GM12878 (cell line): ENCODE measurements at regions of chr4 and their contacts with region 1.

Region 1: DNA sequence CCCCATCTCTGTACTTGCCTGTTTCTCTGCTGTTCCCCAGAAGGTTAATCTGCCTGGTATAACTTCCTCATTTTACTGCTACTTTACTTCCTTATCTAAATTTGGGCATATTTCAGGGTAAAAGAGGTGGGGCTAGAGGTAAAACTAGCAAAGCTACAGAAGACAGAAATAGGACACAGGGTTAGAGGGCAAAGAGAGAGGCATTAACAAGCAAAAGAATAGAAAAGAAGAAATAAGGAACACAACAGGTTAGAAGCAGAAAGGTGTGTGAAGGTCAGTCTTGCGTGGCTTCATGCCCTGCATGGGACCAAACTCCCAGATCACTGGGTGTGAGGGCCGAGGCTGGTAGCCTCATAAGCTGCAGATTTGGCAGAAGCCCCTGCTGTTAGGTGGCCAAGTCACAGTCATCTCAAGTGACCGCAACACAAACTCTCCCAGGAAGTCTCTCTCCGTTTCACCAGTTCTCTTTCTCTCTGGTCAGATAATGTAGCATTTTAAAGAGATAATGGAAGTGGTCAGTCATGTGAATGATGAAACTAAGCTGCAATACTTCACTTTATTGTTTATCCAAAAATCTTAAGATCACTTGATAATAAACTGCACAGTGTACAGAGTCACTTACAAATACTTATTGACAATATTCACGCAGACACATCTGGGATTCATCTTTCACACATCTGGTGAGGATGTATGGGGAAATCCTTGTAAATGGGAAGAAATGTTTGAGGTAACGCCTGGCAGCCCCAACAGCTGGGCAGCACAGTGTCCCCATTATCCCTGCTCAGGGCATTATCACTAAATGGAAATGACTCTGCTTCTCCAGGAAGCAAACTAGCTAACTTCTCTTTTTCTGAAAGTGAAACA is 16.4 kb downstream of the TMEM154 start:
- DNase-seq: peak; percentile 75
- ATAC-seq: peak; percentile 78
- H3K4me3 ChIP-seq: peak overlapping the region; percentile 51; the same call in 1 of the 2 replicates
- H3K27ac ChIP-seq: peak overlapping the region; percentile 79
- H3K4me1 ChIP-seq: peaks cover 66% of the 10 kb centered on the region
- H3K27me3 ChIP-seq: no peaks in the 10 kb centered on the region
- CTCF ChIP-seq: no peak
- EP300 ChIP-seq: peak in 1 of 2 experiments; percentile 32; a peak in 1 of 4 replicates
- POLR2A ChIP-seq: no peak
- RAD21 ChIP-seq: no peak

Region 2: DNA sequence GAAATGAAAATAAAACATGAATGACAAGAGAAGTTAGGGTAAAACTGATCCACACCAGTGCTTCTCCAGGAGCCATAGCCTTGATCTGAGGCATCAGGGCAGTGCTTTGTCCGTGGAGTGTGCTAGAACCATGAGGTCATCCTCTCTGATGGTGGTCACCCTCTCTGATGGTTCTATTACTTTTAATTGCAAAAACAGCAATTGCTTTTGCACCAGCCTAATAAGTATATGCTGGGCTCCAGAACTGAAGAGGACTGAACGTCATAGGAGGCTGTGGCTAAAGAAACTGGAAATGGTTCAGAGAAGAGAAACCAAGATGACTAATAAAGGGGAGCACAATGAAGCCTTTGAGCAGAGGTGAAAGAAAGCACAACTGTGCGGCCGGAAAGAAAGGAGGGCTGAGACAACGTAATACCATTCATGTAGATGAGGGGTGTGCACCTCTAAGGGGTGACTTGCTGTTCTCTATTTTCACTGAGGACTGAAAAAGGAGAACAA is 33.4 kb after region 1 on chr4:
- CTCF ChIA-PET with region 1: interaction called, 5 read pairs
- POLR2A ChIA-PET with region 1: interaction called, 4 read pairs
- RAD21 ChIA-PET with region 1: interaction called, 13 read pairs
- SMC1A ChIA-PET with region 1: interaction called, 10 read pairs
- in situ Hi-C with region 1: no loop called
- intact Hi-C with region 1: loop called (anchors 1 kb)
- DNase-seq: peak; percentile 98
- ATAC-seq: peak; percentile 97
- H3K4me3 ChIP-seq: peak overlapping the region; percentile 42; the same call in 1 of the 2 replicates
- H3K27ac ChIP-seq: peak overlapping the region; percentile 71
- H3K4me1 ChIP-seq: peaks cover 20% of the 10 kb centered on the region
- H3K27me3 ChIP-seq: no peaks in the 10 kb centered on the region
- CTCF ChIP-seq: no peak
- EP300 ChIP-seq: peak; percentile 85 to 93; a peak in 3 of 4 replicates
- POLR2A ChIP-seq: no peak
- RAD21 ChIP-seq: no peak

Region 3: GRCh38 chr4:152709683-152710438 is 46.4 kb after region 1 on chr4:
- CTCF ChIA-PET with region 1: interaction called, 3 read pairs
- POLR2A ChIA-PET with region 1: interaction called, 6 read pairs
- RAD21 ChIA-PET with region 1: no interaction called
- SMC1A ChIA-PET with region 1: interaction called, 14 read pairs
- in situ Hi-C with region 1: no loop called
- intact Hi-C with region 1: no loop called
- DNase-seq: peak; percentile 42
- ATAC-seq: peak; percentile 95
- H3K4me3 ChIP-seq: no peak overlapping the region
- H3K27ac ChIP-seq: peak overlapping the region; percentile 45
- H3K4me1 ChIP-seq: peaks cover 11% of the 10 kb centered on the region
- H3K27me3 ChIP-seq: no peaks in the 10 kb centered on the region
- CTCF ChIP-seq: no peak
- EP300 ChIP-seq: no peak; a peak in 1 of 4 replicates
- POLR2A ChIP-seq: no peak
- RAD21 ChIP-seq: no peak